ENCODE measurements at regions of chr11 and their contacts with region 1.

Region 1: GRCh38 chr11:68003846-68004550 is at the start of gene UNC93B1:
- DNase-seq: peak; percentile 93
- ATAC-seq: peak; percentile 93
- H3K4me3 Mint-ChIP-seq: peak within 1 kb of the TSS; percentile 73
- H3K27ac Mint-ChIP-seq: peak within 1 kb of the TSS; percentile 66
- H3K4me1 Mint-ChIP-seq: peaks cover 15% of the 10 kb centered on the region
- H3K27me3 Mint-ChIP-seq: no peaks in the 10 kb centered on the region
- total RNA-seq, gene UNC93B1: 16.3 to 16.7 TPM

Region 2: DNA sequence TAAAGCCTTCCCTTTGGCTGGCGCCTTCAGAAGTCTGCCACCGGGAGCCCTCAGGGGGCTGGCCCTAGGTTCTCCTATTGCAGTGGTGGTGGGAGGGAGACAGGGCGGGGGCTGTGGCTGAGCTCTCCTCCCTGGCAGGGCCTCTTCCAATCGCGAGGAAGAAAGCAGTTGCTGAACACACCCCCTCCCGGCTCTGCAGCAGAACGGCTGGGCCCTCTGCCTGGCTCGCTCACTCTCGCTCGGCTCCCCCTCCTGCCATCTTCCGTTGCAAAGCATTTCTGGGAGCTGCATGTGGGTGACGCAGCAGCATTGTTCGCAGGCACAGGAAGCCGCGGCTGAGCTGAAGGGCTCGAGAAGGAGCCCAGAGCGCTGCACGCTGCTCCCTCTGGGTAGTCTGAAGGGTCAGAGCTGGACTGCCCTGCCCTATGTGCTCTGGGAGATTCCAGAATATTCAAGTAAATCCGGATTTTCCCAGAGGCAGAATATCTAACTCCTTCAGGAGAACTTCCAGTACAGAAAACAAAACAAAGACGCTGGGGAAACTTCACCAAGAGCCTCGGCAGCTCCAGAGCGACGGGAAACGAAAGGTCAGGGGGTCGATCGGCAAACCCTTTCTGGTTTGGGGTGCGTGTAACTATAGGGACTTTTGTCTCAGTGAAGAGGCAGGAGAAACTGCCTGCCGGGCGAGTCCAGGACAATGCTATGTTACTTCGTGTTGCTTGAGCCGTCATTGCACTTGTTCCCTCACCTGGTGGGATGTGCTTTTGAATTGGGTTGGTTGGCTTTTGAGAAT is 764.0 kb before region 1 on chr11:
- CTCF ChIA-PET with region 1: no interaction called
- POLR2A ChIA-PET with region 1: no interaction called
- intact Hi-C with region 1: loop called in 1 of 2 experiments (anchors 5 kb)
- DNase-seq: peak; percentile 98
- ATAC-seq: peak; percentile 94
- H3K4me3 Mint-ChIP-seq: peak overlapping the region; percentile 98
- H3K27ac Mint-ChIP-seq: peak overlapping the region; percentile 99
- H3K4me1 Mint-ChIP-seq: peaks cover 43% of the 10 kb centered on the region
- H3K27me3 Mint-ChIP-seq: no peaks in the 10 kb centered on the region

Region 3: DNA sequence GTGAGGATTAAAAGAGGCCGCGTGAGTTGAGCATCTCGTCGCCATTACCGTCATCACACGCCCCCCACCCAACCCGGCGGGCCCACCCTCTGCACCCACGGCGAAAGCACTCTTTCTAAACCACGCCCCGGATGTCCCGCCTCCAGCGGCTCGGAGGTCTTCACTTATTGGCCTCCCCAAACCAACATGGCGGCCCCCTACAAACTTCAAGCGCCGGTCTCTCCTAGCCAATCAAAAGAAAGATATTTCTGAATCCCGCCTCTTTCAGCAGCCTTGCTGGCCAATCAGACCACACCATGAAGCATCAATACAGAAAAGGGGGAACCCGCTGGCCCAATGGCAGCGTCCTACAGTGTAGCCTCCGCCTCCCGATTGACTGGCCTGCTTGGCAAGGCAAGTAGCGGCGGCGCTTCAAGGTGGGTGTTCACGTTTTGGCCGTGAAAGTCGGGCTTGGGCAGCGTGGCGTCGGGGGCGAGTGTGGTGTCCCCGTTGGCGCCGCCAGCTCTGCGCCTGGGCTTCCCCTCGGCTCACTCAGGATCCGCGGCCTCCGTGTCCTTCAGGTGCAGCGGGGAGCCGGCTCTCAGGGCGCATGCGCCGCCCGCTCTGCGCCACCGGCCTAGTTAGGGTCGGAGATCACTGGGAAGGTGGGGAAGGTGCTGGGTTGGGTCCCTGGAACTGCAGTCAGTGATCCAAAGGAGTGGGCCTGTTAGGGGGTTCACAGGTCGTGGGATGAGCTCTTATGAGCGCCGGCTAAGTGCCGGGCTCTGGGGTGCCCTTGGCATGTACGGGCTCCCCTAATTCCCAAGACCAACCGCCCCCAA is 26.5 kb after region 1 on chr11 and contains the start of gene NDUFS8:
- CTCF ChIA-PET with region 1: no interaction called
- POLR2A ChIA-PET with region 1: no interaction called
- intact Hi-C with region 1: loop called (anchors 1 to 5 kb)
- DNase-seq: peak; percentile 97
- ATAC-seq: peak; percentile 99
- H3K4me3 Mint-ChIP-seq: peak within 1 kb of the TSS; percentile 96
- H3K27ac Mint-ChIP-seq: peak within 1 kb of the TSS; percentile 95
- H3K4me1 Mint-ChIP-seq: peaks cover 26% of the 10 kb centered on the region
- H3K27me3 Mint-ChIP-seq: no peaks in the 10 kb centered on the region
- total RNA-seq, gene NDUFS8: 108 to 113 TPM

Region 4: GRCh38 chr11:68038718-68039525 is 34.9 kb after region 1 on chr11 and contains the start of gene TCIRG1:
- CTCF ChIA-PET with region 1: no interaction called
- POLR2A ChIA-PET with region 1: no interaction called
- intact Hi-C with region 1: loop called (anchors 2 to 5 kb)
- DNase-seq: peak; percentile 82
- ATAC-seq: peak; percentile 76
- H3K4me3 Mint-ChIP-seq: peak within 1 kb of the TSS; percentile 88
- H3K27ac Mint-ChIP-seq: peak within 1 kb of the TSS; percentile 90
- H3K4me1 Mint-ChIP-seq: peaks cover 18% of the 10 kb centered on the region
- H3K27me3 Mint-ChIP-seq: no peaks in the 10 kb centered on the region
- total RNA-seq, gene TCIRG1: 117 to 151 TPM

Region 5: DNA sequence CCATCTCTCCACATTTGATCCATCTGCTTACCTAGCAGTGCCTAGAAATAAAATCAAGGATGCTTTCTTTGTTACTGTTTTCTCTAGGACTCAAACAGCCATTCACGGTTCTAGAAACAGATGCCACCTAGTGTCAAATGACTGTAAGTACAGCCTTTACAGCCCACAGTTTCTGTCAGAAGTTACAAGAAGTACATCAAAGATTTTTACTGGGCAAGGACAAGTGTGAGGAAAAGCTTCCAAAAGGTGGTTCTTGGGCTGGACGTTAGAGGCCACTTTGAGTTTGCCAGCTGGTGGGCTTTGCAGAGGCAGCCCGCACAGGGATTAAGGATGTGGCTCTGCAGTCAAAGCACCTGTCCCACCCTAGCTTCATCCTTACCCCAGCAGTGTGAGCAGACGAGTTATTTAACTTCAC is 202.2 kb after region 1 on chr11:
- CTCF ChIA-PET with region 1: no interaction called
- POLR2A ChIA-PET with region 1: no interaction called
- intact Hi-C with region 1: loop called (anchors 2 to 10 kb)
- DNase-seq: no peak
- ATAC-seq: peak; percentile 62
- H3K4me3 Mint-ChIP-seq: no peak overlapping the region
- H3K27ac Mint-ChIP-seq: peak overlapping the region; percentile 20
- H3K4me1 Mint-ChIP-seq: peaks cover 69% of the 10 kb centered on the region
- H3K27me3 Mint-ChIP-seq: no peaks in the 10 kb centered on the region

Measured in activated CD4-positive, alpha-beta T cell treated with anti-CD3 and anti-CD28 coated beads for 36 hours (primary cell).